ENCODE measurements at regions of chr16 and their contacts with region 1.

Region 1: DNA sequence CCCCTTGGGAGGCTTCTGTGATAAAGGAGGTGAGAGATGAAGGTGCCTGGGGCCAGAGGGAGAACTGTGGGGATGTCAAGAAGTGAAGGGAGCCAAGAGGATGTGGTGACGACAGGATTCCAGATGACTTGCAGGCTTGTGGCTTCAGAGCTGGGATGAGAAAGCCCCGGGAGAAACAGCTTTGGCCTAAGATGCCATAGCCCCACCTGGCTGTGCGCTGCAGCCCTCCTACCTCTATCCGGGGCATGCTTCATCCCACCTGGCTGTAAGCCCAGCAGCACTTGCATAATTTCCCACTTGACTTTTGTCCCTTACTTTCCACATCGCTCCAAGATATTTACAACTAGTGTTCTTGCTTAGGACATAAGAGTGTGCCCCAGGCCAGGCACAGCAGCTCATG is 29.3 kb downstream of the GINS3 start:
- DNase-seq: peak; percentile 59 to 84
- H3K4me3 ChIP-seq: no peak overlapping the region
- H3K27ac ChIP-seq: peak overlapping the region; percentile 58
- H3K4me1 ChIP-seq: peaks cover 35% of the 10 kb centered on the region
- H3K27me3 ChIP-seq: no peaks in the 10 kb centered on the region
- CTCF ChIP-seq: peak; percentile 19; the same call in 1 of the 2 replicates

Region 2: GRCh38 chr16:58137581-58137980 is 283.9 kb before region 1 on chr16:
- CTCF ChIA-PET with region 1: no interaction called
- POLR2A ChIA-PET with region 1: no interaction called
- intact Hi-C with region 1: no loop called
- DNase-seq: no peak
- H3K4me3 ChIP-seq: no peak overlapping the region
- H3K27ac ChIP-seq: no peak overlapping the region
- H3K4me1 ChIP-seq: no peaks in the 10 kb centered on the region
- H3K27me3 ChIP-seq: no peaks in the 10 kb centered on the region
- CTCF ChIP-seq: no peak

Region 3: DNA sequence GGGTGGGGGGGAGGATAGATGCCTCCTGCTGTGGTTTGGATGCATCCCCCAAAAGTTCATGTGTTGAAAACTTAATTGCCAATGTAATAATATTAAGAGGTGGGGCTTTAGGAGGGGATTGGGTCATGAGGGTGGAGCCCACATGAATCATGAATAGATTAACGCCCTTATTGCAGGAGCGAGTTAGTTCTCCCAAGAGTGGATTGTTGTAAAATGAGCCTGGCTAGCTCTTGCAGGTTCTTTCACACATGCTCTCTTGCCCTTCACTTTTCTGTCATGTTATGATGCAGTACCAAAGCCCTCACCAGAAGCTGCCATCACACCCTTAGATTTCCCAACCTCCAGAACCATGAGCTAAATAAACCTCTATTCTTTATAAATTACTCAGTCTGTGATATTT is 22.7 kb after region 1 on chr16:
- CTCF ChIA-PET with region 1: interaction called, 16 read pairs
- POLR2A ChIA-PET with region 1: no interaction called
- intact Hi-C with region 1: no loop called
- DNase-seq: no peak
- H3K4me3 ChIP-seq: no peak overlapping the region
- H3K27ac ChIP-seq: no peak overlapping the region
- H3K4me1 ChIP-seq: 0 out of 2 replicates have a peak, but pooled peaks cover 3% of the 10 kb centered on the region
- H3K27me3 ChIP-seq: no peaks in the 10 kb centered on the region
- CTCF ChIP-seq: no peak

Region 4: DNA sequence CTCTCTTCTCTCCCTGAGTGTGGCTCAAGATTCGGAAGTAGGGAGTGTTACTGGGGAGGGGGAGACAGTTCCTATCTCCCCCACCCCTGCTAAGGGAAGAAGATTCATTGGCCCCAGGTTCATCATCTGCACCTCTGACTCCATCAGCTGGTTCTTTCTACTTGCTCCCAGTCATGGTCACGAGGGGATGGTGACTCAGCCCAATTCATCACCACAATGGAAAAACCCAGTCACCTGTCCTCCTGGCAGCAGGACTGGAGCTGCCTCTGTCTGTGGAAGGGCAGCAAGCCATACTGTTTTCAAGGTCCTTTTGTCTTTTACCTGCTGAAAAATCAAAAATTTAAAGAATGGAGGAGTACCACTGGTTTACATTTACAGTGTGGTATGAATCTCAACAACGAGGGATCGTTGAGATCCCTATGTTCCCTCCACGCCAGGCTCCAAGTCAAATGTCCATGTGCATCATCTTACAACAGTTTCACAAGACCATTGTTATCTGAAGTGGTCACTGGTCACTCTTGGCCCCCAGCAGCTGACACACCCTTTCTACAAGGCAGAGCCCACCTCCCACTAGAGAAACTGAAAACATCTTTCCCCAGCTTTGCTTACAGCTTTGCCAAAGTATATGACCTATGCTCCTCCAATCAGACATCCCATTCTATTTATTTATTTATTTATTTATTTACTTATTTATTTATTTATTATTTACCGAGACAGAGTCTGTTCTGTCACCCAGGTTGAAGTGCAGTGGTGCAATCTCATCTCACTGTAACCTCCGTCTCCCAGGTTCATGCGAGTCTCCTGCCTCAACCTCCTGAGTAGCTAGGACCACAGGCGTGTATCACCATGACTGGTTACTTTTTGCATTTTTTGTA is 38.1 kb after region 1 on chr16:
- CTCF ChIA-PET with region 1: no interaction called
- POLR2A ChIA-PET with region 1: no interaction called
- intact Hi-C with region 1: loop called (anchors 5 kb)
- DNase-seq: peak; percentile 46 to 71
- H3K4me3 ChIP-seq: no peak overlapping the region
- H3K27ac ChIP-seq: peak overlapping the region; percentile 51
- H3K4me1 ChIP-seq: peaks cover 53% of the 10 kb centered on the region
- H3K27me3 ChIP-seq: peaks cover 3% of the 10 kb centered on the region; the same call in 1 of the 2 replicates
- CTCF ChIP-seq: no peak

Region 5: GRCh38 chr16:58923094-58923493 is 501.6 kb after region 1 on chr16:
- CTCF ChIA-PET with region 1: no interaction called
- POLR2A ChIA-PET with region 1: no interaction called
- intact Hi-C with region 1: no loop called
- DNase-seq: no peak
- H3K4me3 ChIP-seq: no peak overlapping the region
- H3K27ac ChIP-seq: no peak overlapping the region
- H3K4me1 ChIP-seq: no peaks in the 10 kb centered on the region
- H3K27me3 ChIP-seq: no peaks in the 10 kb centered on the region
- CTCF ChIP-seq: no peak